ENCODE measurements at regions of chrX and their contacts with region 1.

Region 1: GRCh38 chrX:20906571-20906970 is 467.6 kb upstream of the CNKSR2 start:
- DNase-seq: no peak
- ATAC-seq: no peak
- H3K4me3 ChIP-seq: no peak overlapping the region
- H3K27ac ChIP-seq: no peak overlapping the region
- H3K4me1 ChIP-seq: no peaks in the 10 kb centered on the region
- H3K27me3 ChIP-seq: no peaks in the 10 kb centered on the region

Region 2: DNA sequence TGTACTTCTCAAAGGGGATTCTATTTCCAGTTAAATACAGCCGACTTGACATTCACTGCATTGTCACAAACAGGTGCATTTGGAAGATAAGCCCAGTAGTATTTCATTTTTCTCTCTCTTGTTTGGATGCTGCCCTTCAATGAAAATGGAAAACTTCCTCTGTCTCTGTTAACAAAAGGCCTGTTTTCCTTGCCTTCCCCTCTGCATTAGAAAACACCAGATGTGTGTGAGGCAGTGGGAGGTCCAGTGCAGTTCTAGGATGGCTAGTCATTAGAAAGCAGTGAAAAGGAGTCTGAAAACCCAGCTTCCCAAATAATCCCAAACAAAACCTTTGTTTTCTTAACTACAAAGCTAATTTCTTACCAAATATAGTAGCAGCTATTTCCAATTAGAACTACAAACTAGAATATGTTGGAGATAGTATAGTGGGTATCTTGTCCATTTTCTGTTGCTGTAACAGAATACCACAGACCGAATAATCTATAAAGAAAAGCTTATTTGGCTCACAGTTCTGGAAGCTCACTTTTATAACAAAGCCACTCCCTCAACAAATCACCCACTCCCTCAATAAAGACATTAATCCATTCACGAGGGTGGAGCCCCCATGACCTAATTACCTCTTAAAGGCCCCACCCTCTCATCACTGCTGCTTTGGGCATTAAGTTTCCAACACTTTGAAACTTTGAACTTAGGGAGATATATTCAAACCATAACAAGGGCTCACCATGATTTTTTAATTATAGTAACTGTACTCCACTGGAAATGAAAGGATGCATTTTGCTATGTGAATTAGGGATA is 187.8 kb before region 1 on chrX:
- intact Hi-C with region 1: loop called in 1 of 2 experiments (anchors 10 kb)
- DNase-seq: no peak
- ATAC-seq: no peak
- H3K4me3 ChIP-seq: no peak overlapping the region
- H3K27ac ChIP-seq: no peak overlapping the region
- H3K4me1 ChIP-seq: no peaks in the 10 kb centered on the region
- H3K27me3 ChIP-seq: no peaks in the 10 kb centered on the region

Region 3: DNA sequence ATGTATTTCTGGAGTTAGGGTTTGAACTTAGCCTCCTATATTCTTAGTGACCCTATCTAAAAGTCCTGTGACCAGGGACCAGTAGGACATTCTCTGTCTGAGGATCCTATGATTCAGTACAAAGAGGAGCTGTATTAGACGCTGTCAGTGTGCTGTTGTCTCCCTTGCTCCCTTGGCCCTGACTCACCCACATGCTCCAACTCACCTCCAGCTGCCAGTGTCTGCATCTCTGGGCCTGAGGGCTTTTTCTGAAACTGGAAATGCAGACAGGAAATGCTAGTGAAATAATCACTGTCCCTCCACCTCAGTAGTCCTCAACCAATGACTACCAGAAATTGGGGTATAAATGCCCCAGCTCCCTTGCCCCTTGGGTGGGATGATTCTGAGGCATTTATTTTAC is 104.5 kb before region 1 on chrX:
- intact Hi-C with region 1: no loop called
- DNase-seq: no peak
- ATAC-seq: no peak
- H3K4me3 ChIP-seq: no peak overlapping the region
- H3K27ac ChIP-seq: no peak overlapping the region
- H3K4me1 ChIP-seq: no peaks in the 10 kb centered on the region
- H3K27me3 ChIP-seq: no peaks in the 10 kb centered on the region

Region 4: DNA sequence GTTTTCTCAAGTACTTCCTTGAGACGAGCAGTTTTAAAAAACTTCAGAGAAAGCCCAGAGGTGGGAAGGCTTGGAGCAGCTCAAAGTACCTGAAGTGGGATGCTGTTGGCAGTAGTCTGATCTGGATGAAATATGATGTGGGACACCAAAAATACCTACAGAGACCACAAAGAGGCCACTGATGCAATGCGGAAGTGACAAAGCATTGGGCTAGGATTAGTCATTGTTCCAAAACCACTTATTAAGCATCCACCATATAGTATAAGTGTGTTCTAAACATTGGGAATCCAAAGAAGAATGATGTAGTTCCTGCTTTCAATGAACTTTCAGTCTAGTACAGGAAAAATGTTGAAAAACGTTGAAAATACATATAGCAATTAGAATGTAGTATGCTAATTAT is 81.5 kb after region 1 on chrX:
- intact Hi-C with region 1: no loop called
- DNase-seq: no peak
- ATAC-seq: no peak
- H3K4me3 ChIP-seq: no peak overlapping the region
- H3K27ac ChIP-seq: no peak overlapping the region
- H3K4me1 ChIP-seq: no peaks in the 10 kb centered on the region
- H3K27me3 ChIP-seq: no peaks in the 10 kb centered on the region

Measured in aorta (tissue), 5 donors.